Activated CD4-positive, alpha-beta T cell treated with anti-CD3 and anti-CD28 coated beads, Interleukin-2, amount 10 ng/mL, durations not matched to agents 7 days and 5 days (primary cell): ENCODE measurements at regions of chr2 and their contacts with region 1.

Region 1: DNA sequence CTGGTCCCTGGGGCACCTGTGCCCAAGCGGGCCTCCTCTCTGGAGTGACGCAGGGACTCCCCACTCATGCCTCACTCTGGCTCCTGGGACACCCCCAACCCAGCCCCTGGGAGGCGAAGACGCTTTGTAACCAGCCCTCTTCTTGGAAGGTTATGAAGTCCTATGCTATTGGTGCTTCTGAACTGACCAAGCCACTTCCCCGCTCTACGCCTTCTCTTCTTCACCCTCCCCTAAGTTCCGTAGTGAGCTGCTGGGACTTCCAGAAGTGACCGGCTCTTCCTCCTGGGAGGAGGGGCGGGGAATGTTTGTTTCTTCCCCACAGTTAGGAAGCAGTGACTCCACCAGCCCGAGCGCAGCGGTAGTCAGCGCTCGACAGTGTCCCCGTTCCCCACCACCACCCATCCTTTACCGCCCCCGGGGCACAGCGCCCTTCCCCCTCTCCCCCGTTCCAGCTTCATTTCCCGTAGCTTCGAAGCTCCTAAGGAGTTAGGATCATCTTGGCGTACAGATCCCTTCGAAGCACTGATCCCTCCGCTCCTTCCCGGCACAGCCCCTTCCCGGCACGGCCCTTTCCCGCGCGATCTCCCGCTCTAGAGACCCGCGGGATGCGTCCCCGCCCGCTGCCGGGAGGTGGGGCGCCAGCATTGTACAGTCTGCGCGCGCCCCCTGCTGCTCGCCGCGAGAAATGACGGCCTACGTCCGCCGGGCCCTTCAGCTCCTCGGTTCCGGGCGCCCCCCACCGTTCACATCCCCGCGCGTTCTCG is 25.3 kb upstream of the NOTO start:
- DNase-seq: peak; percentile 88
- H3K4me3 Mint-ChIP-seq: peak overlapping the region; percentile 77
- H3K27ac Mint-ChIP-seq: peak overlapping the region; percentile 50
- H3K4me1 Mint-ChIP-seq: peaks cover 18% of the 10 kb centered on the region
- H3K27me3 Mint-ChIP-seq: peaks cover 67% of the 10 kb centered on the region

Region 2: DNA sequence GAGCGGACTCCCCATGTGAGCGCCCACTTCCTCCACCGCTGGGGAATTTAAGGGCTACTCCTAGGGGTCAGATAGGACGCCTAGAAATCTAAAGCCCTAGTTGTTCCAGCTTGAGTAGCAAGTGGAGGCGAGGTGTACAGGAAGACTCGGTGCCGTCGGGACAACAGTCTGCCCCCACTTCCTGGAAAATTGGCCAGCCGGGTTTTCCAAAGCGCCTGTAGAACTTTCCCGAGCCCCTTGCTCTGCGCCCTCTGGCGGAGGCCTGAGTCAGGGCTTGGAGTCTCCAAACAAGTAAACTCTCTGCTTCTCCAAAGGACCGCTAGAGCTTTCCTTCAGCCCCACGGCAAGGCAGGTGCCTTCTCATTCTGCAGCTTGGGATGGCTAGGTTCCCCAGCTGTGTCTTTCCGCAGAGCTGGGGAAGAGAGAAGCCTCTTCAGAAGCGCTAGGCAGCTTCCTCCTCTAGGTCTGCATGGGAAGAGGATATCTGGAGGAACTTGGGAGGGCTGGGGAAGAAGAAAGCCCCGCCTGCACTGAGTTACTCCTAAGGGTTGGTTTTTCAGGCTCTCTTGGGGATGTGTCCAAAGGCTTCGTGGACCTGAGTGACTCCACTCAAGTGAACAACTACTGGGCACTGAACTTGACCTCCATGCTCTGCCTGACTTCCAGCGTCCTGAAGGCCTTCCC is 289.2 kb before region 1 on chr2:
- CTCF ChIA-PET with region 1: interaction called, 19 read pairs
- POLR2A ChIA-PET with region 1: no interaction called
- DNase-seq: peak; percentile 47
- H3K4me3 Mint-ChIP-seq: peak overlapping the region; percentile 63
- H3K27ac Mint-ChIP-seq: no peak overlapping the region
- H3K4me1 Mint-ChIP-seq: peaks cover 3% of the 10 kb centered on the region
- H3K27me3 Mint-ChIP-seq: peaks cover 52% of the 10 kb centered on the region

Region 3: DNA sequence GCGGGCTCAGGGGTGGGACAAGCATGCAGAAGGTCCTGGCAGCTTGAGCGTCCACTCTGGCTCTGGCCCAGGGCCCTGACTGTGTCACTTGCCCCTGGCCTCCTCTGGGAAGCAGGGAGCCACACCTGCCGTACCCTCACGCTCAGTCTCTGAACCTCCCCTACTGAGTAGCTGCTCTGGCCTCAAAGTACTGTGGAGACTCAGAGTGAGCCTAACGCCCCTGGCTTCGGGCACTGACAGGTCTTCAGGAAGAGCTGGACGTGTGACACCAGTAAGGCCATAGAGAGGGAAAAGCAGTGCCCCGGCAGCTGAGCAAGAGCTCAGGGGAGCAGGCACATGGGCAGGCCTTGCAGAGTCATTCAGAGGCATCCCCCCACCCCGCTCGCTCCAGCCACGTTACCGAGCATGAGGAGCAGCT is 178.8 kb before region 1 on chr2:
- CTCF ChIA-PET with region 1: interaction called, 11 read pairs
- POLR2A ChIA-PET with region 1: no interaction called
- DNase-seq: no peak
- H3K4me3 Mint-ChIP-seq: no peak overlapping the region
- H3K27ac Mint-ChIP-seq: no peak overlapping the region
- H3K4me1 Mint-ChIP-seq: no peaks in the 10 kb centered on the region
- H3K27me3 Mint-ChIP-seq: no peaks in the 10 kb centered on the region

Region 4: DNA sequence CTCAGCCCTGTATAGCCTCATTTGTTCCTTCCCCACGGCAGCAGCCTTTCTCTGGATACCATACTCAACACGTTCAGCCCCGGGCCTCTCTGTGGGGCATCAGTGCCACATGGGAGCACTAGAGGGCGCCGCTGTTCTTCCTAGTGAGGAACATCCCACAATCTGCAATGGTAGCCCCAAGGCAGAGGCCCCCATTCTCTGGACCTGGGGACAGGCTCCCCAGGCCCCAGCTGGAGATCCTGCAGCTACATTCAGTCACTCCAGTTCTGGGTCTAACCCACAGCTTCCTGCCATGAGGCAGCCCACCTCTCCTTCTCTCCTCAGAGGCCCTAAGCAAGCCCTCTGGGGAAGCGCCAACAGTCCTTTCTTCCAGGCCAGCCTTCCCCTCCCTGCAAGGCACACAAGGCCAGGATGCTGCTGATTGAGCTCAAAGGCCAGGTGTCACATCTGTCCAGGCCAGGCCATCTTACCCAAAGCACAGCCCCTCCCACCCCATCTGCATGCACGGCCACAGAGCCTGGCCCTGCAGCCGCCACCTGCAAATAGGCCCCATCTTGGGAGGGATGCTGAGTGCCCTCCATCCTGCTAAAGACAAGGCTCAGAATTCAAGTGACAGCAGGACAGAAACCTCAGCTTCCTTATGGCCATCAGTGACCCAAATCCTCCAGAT is 91.2 kb before region 1 on chr2:
- CTCF ChIA-PET with region 1: interaction called, 28 read pairs
- POLR2A ChIA-PET with region 1: no interaction called
- DNase-seq: peak; percentile 85
- H3K4me3 Mint-ChIP-seq: no peak overlapping the region
- H3K27ac Mint-ChIP-seq: no peak overlapping the region
- H3K4me1 Mint-ChIP-seq: no peaks in the 10 kb centered on the region
- H3K27me3 Mint-ChIP-seq: no peaks in the 10 kb centered on the region

Region 5: GRCh38 chr2:73212448-73213176 is 35.5 kb after region 1 on chr2:
- CTCF ChIA-PET with region 1: interaction called, 33 read pairs
- POLR2A ChIA-PET with region 1: no interaction called
- DNase-seq: peak; percentile 78
- H3K4me3 Mint-ChIP-seq: no peak overlapping the region
- H3K27ac Mint-ChIP-seq: peak overlapping the region; percentile 34
- H3K4me1 Mint-ChIP-seq: peaks cover 31% of the 10 kb centered on the region
- H3K27me3 Mint-ChIP-seq: peaks cover 9% of the 10 kb centered on the region